MCF 10A (cell line): ENCODE measurements at regions of chr10 and their contacts with region 1.

Region 1: DNA sequence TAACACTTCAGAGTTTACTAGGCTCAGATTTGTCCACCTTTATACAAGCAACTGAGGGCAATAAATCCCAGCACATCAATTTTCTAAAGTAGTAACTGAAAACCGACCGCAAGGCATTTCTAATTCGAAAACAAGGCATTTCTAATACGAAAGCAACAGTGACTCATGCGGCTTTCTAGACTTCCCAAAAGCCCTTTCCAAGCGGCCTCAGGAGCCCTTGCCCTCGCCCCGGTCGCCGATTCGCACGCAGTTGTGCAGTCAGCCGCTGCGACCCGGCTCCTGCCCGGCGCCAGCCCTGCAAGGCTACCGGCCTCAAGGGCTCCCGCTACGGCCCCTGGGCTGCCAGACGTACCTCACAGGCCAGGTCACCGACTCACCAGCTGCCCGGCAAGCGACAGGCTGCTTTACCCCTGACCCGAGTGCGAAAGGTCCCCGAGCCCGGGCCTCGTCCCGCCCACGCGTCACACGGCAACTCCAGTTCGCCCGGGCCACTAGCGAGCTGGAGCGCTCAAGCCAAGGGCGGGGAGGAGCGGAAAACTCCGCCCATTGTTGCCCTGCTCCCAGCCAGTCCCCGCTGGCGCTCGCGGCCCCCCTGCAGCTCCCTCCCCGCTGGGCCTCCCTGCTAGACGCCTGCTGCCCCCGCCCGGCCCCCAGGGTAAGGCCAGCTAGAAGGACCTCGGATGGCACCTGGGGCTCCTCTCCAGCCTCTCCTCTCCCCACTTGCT is 7.3 kb downstream of the NCOA4 start:
- DNase-seq: peak; percentile 91
- H3K4me3 Mint-ChIP-seq: peak overlapping the region; percentile 79
- H3K27ac Mint-ChIP-seq: peak overlapping the region; percentile 63
- H3K4me1 Mint-ChIP-seq: peaks cover 43% of the 10 kb centered on the region
- H3K27me3 Mint-ChIP-seq: no peaks in the 10 kb centered on the region
- CTCF ChIP-seq: no peak

Region 2: GRCh38 chr10:45008524-45009161 is 1014.5 kb before region 1 on chr10:
- CTCF ChIA-PET with region 1: no interaction called
- POLR2A ChIA-PET with region 1: no interaction called
- intact Hi-C with region 1: loop called (anchors 10 kb)
- DNase-seq: peak; percentile 89
- H3K4me3 Mint-ChIP-seq: no peak overlapping the region
- H3K27ac Mint-ChIP-seq: no peak overlapping the region
- H3K4me1 Mint-ChIP-seq: no peaks in the 10 kb centered on the region
- H3K27me3 Mint-ChIP-seq: no peaks in the 10 kb centered on the region
- CTCF ChIP-seq: peak; percentile 63

Region 3: DNA sequence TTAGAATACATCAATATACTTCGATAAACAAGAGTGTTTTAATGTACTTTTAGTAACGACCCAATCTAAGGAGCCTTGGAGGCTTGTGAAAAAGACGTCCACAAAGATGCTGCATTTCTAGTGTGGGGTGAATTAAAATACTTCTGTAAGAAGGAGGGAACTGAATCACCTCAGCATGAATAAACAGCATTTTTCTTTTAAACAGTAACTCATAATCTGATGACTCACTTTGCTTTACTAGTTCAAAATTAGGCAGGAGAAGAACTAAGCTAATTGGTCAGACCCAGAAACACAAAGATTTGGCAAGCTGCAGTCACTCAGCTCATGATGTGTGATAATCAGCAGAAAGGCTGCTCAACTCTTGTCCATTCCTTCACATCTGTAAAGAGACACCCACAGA is 16.9 kb before region 1 on chr10:
- CTCF ChIA-PET with region 1: interaction called, 43 read pairs
- POLR2A ChIA-PET with region 1: interaction called, 34 read pairs
- intact Hi-C with region 1: no loop called
- DNase-seq: peak; percentile 62
- H3K4me3 Mint-ChIP-seq: no peak overlapping the region
- H3K27ac Mint-ChIP-seq: peak overlapping the region; percentile 51
- H3K4me1 Mint-ChIP-seq: peaks cover 10% of the 10 kb centered on the region
- H3K27me3 Mint-ChIP-seq: no peaks in the 10 kb centered on the region
- CTCF ChIP-seq: no peak